HepG2 (cell line): ENCODE measurements at regions of chr12 and their contacts with region 1.

Region 1: GRCh38 chr12:12081836-12082497 is 11.2 kb downstream of the BCL2L14 start:
- DNase-seq: peak; percentile 70
- ATAC-seq: peak; percentile 94
- H3K4me3 ChIP-seq: peak overlapping the region; percentile 30 to 49 (median 38)
- H3K27ac ChIP-seq: peak overlapping the region; percentile 49
- H3K4me1 ChIP-seq: peaks cover 37% of the 10 kb centered on the region
- H3K27me3 ChIP-seq: no peaks in the 10 kb centered on the region; a peak in 2 of 5 replicates
- CTCF ChIP-seq: peak; percentile 78
- EP300 ChIP-seq: no peak
- POLR2A ChIP-seq: no peak
- RAD21 ChIP-seq: peak; percentile 50

Region 2: GRCh38 chr12:12046401-12046800 is 35.6 kb before region 1 on chr12:
- CTCF ChIA-PET with region 1: no interaction called
- POLR2A ChIA-PET with region 1: no interaction called
- in situ Hi-C with region 1: no loop called
- intact Hi-C with region 1: loop called (anchors 1 kb)
- DNase-seq: no peak
- ATAC-seq: no peak
- H3K4me3 ChIP-seq: no peak overlapping the region
- H3K27ac ChIP-seq: no peak overlapping the region
- H3K4me1 ChIP-seq: peaks cover 16% of the 10 kb centered on the region
- H3K27me3 ChIP-seq: no peaks in the 10 kb centered on the region
- CTCF ChIP-seq: no peak
- EP300 ChIP-seq: no peak
- POLR2A ChIP-seq: no peak
- RAD21 ChIP-seq: no peak

Region 3: GRCh38 chr12:12194206-12194605 is 112.2 kb after region 1 on chr12:
- CTCF ChIA-PET with region 1: no interaction called
- POLR2A ChIA-PET with region 1: no interaction called
- in situ Hi-C with region 1: no loop called
- intact Hi-C with region 1: no loop called
- DNase-seq: peak; percentile 28
- ATAC-seq: no peak; the same call in 2 of the 3 replicates
- H3K4me3 ChIP-seq: no peak overlapping the region
- H3K27ac ChIP-seq: no peak overlapping the region
- H3K4me1 ChIP-seq: peaks cover 22% of the 10 kb centered on the region
- H3K27me3 ChIP-seq: no peaks in the 10 kb centered on the region
- CTCF ChIP-seq: no peak
- EP300 ChIP-seq: no peak
- POLR2A ChIP-seq: no peak
- RAD21 ChIP-seq: no peak

Region 4: GRCh38 chr12:12319451-12320183 is 237.7 kb after region 1 on chr12:
- CTCF ChIA-PET with region 1: no interaction called
- POLR2A ChIA-PET with region 1: no interaction called
- in situ Hi-C with region 1: loop called (anchors 5 kb)
- intact Hi-C with region 1: no loop called
- DNase-seq: peak; percentile 30
- ATAC-seq: peak; percentile 30; the same call in 1 of the 3 replicates
- H3K4me3 ChIP-seq: peak overlapping the region; percentile 43 to 57 (median 54); a peak in 4 of 6 replicates
- H3K27ac ChIP-seq: peak overlapping the region; percentile 63
- H3K4me1 ChIP-seq: peaks cover 48% of the 10 kb centered on the region
- H3K27me3 ChIP-seq: no peaks in the 10 kb centered on the region
- CTCF ChIP-seq: no peak
- EP300 ChIP-seq: no peak
- POLR2A ChIP-seq: no peak
- RAD21 ChIP-seq: no peak

Region 5: GRCh38 chr12:12334367-12335040 is 252.5 kb after region 1 on chr12:
- CTCF ChIA-PET with region 1: interaction called, 22 read pairs
- POLR2A ChIA-PET with region 1: no interaction called
- in situ Hi-C with region 1: no loop called
- intact Hi-C with region 1: loop called (anchors 1 kb)
- DNase-seq: peak; percentile 53
- ATAC-seq: peak; percentile 88
- H3K4me3 ChIP-seq: no peak overlapping the region
- H3K27ac ChIP-seq: no peak overlapping the region
- H3K4me1 ChIP-seq: peaks cover 34% of the 10 kb centered on the region
- H3K27me3 ChIP-seq: no peaks in the 10 kb centered on the region
- CTCF ChIP-seq: peak; percentile 82
- EP300 ChIP-seq: no peak
- POLR2A ChIP-seq: no peak
- RAD21 ChIP-seq: peak; percentile 62; the same call in 1 of the 2 replicates

Region 6: DNA sequence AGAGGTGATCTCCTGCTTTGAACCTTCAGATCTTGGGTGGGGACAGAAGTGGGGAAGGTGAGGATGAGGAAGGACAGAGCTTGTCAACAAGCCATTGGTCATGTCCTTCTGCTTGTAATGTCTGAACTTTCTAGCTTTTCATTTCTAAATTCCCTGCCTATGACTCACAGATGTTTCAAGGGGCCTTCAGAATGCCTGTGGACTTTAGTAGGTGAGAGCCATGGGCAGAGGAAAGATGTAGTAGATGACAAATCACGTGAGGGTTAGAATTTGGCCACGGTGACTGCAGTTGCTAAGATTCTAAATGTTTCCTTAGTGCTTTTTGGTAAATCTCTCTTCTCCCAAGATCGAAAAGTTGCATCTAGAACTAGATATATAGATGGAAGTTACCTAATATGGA is 511.0 kb after region 1 on chr12:
- CTCF ChIA-PET with region 1: no interaction called
- POLR2A ChIA-PET with region 1: no interaction called
- in situ Hi-C with region 1: no loop called
- intact Hi-C with region 1: no loop called
- DNase-seq: peak; percentile 56
- ATAC-seq: no peak; the same call in 1 of the 3 replicates
- H3K4me3 ChIP-seq: no peak overlapping the region
- H3K27ac ChIP-seq: no peak overlapping the region
- H3K4me1 ChIP-seq: peaks cover 7% of the 10 kb centered on the region
- H3K27me3 ChIP-seq: no peaks in the 10 kb centered on the region; a peak in 2 of 5 replicates
- CTCF ChIP-seq: no peak
- EP300 ChIP-seq: no peak
- POLR2A ChIP-seq: no peak
- RAD21 ChIP-seq: no peak

Region 7: GRCh38 chr12:12724661-12725545 is 642.9 kb after region 1 on chr12:
- CTCF ChIA-PET with region 1: no interaction called
- POLR2A ChIA-PET with region 1: no interaction called
- in situ Hi-C with region 1: loop called (anchors 25 kb)
- intact Hi-C with region 1: no loop called
- DNase-seq: peak; percentile 97
- ATAC-seq: peak; percentile 74
- H3K4me3 ChIP-seq: peak overlapping the region; percentile 73 to 96 (median 85)
- H3K27ac ChIP-seq: peak overlapping the region; percentile 98
- H3K4me1 ChIP-seq: peaks cover 52% of the 10 kb centered on the region
- H3K27me3 ChIP-seq: no peaks in the 10 kb centered on the region
- CTCF ChIP-seq: no peak
- EP300 ChIP-seq: peak; percentile 41 to 80; a peak in 2 of 4 replicates
- POLR2A ChIP-seq: peak; percentile 65; a peak in 3 of 4 replicates
- RAD21 ChIP-seq: no peak

Region 8: DNA sequence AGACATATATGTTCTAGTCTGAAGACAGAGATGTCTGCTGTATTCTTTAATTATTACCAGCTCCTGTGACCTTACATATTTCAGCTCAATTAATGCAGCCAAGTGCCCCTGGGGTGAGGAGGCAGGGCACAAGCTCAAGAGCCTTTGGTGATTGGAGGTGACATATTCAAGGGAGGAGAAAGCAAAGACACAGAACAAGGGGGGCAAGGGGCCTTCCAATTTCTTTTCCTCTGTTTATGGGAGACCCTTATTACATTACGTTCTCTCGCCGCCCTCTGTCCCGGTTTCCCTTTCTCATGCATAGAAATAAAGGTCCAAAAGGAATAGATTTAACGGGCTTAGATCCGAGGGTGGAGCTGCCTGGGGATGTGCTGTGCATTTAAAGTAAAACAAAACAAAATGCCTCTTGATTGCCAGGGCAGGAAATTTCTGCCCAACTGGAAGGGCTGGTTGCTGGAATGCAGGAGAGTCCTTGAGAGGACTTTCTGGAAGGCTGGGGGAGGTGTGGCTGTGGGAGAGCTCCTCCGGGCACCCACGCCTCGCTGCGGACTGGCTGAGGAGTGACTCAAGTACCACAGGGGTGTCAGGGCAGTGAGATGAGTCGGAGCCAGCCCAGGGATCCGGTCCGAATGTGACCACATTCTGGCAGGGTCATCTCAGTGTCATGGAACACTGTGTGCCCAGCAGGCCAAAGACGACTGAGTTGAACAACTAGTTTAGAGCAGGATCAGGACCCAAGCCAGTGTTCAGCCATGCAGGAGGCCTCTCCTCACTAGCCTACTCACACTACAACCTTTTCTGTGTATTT is 1053.6 kb after region 1 on chr12:
- CTCF ChIA-PET with region 1: no interaction called
- POLR2A ChIA-PET with region 1: no interaction called
- in situ Hi-C with region 1: no loop called
- intact Hi-C with region 1: no loop called
- DNase-seq: no peak
- ATAC-seq: no peak
- H3K4me3 ChIP-seq: no peak overlapping the region
- H3K27ac ChIP-seq: no peak overlapping the region
- H3K4me1 ChIP-seq: no peaks in the 10 kb centered on the region
- H3K27me3 ChIP-seq: peaks cover 0 to 3% of the 10 kb centered on the region in 2 experiments; a peak in 1 of 5 replicates
- CTCF ChIP-seq: no peak
- EP300 ChIP-seq: no peak
- POLR2A ChIP-seq: no peak
- RAD21 ChIP-seq: no peak